Sigmoid colon (tissue), 7 donors: ENCODE measurements at regions of chr6 and their contacts with region 1.

Region 1: GRCh38 chr6:26537846-26538571 is at the start of gene HMGN4:
- DNase-seq: peak; percentile 94
- H3K4me3 ChIP-seq: peak within 1 kb of the TSS; percentile 78 to 95 (median 86)
- H3K27ac ChIP-seq: peak within 1 kb of the TSS; percentile 87 to 98 (median 94)
- H3K4me1 ChIP-seq: peaks cover 0 to 45% (median 29%) of the 10 kb centered on the region in 4 donors
- H3K27me3 ChIP-seq: no peaks in the 10 kb centered on the region
- CTCF ChIP-seq: no peak
- EP300 ChIP-seq: no peak
- POLR2A ChIP-seq: peak; percentile 48 to 52
- total RNA-seq, gene HMGN4: 70.6 to 104 (median 77.2) TPM

Region 2: GRCh38 chr6:25804804-25805203 is 733.2 kb before region 1 on chr6:
- intact Hi-C with region 1: no loop called
- DNase-seq: no peak
- H3K4me3 ChIP-seq: no peak overlapping the region
- H3K27ac ChIP-seq: no peak overlapping the region
- H3K4me1 ChIP-seq: no peaks in the 10 kb centered on the region
- H3K27me3 ChIP-seq: no peaks in the 10 kb centered on the region
- CTCF ChIP-seq: no peak
- EP300 ChIP-seq: no peak
- POLR2A ChIP-seq: no peak

Region 3: DNA sequence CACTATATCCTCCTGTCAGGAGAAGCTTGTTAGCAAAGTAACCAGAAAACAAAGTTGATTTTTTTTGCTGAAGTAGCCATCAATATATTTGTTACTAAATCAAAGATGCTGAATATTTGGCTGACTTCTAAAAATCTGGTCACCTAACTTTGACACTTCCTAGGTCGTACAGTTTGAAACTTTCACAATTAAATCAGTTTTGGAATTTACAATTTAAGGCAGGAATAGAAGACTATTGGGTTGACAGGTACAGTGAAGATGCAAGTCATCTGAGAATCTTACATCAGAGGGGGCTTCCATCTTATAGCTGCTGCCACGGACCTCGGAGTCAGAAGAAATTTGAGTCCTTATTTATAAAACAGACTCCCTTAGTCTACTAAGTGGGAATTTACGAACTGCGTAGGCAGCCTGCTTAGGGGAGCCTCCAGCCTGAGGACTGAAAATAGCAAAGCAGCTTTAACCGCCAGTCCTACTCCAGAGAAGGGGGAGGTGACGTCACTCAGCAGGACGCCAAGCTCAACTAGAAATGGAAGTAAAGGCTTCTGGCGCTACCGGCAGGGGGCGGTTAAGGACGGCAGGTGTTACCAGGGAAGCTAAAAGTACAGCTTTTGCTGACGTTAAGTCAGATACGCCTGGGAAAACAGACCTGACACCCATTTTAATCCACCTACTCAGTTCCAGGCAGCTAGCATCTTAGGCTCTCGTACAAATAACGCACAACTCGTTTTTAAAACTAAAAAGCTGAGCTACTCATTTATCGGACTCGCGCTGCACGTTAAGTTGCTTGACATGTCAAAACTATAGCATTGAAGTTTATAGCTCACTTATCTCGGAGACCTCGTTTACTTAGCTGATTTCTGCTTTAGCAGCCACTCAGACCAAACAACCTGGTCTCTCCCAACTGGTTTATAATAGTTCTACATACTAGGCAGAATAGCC is 511.8 kb before region 1 on chr6:
- intact Hi-C with region 1: loop called (anchors 10 kb)
- DNase-seq: peak; percentile 99
- H3K4me3 ChIP-seq: peak overlapping the region; percentile 53 to 76 (median 61)
- H3K27ac ChIP-seq: peak overlapping the region; percentile 90 to 99 (median 95)
- H3K4me1 ChIP-seq: peaks cover 0 to 31% (median 19%) of the 10 kb centered on the region in 4 donors
- H3K27me3 ChIP-seq: no peaks in the 10 kb centered on the region
- CTCF ChIP-seq: peak in 3 of 4 experiments; percentile 75 to 93 (median 77)
- EP300 ChIP-seq: peak in 2 of 4 donors; percentile 62 to 73
- POLR2A ChIP-seq: peak; percentile 46 to 53

Region 4: DNA sequence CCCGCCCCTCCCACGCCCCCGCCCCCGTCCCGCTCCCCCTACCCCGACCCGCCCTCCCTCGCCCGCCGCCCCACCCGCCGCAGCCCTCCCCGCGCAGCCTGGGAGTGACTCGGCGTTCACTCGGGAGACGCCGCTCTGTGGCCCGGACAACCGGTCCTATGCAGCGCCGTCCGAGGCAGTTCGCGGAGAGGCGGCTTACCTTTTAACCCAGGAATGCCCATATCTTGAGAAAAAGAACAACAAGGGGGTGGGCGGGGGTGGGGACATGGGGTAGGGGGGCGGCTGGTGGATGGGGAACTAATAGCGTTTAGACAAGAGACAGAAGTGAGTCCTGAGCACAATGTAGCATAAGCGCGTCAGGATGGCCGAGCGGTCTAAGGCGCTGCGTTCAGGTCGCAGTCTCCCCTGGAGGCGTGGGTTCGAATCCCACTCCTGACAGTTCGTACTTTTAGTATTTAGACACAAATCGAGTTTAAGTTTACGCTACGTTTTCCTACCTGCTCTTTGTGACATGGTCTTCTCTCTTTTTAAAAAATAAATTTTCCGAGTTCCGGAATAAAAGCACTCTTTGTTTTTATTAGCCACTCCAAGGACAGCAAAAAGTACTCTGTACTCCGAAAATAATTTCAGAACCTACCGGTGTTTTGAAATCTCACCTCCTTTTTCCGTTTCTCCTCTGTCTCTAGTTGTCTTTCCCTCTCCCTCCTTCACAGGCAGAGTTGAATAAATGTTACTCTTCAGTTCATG is 17.0 kb before region 1 on chr6:
- intact Hi-C with region 1: loop called (anchors 1 kb)
- DNase-seq: peak; percentile 95
- H3K4me3 ChIP-seq: peak overlapping the region; percentile 55 to 65 (median 61)
- H3K27ac ChIP-seq: peak overlapping the region; percentile 96 to 99 (median 98)
- H3K4me1 ChIP-seq: peaks cover 0 to 32% (median 6%) of the 10 kb centered on the region in 4 donors
- H3K27me3 ChIP-seq: no peaks in the 10 kb centered on the region
- CTCF ChIP-seq: no peak
- EP300 ChIP-seq: no peak
- POLR2A ChIP-seq: no peak

Region 5: DNA sequence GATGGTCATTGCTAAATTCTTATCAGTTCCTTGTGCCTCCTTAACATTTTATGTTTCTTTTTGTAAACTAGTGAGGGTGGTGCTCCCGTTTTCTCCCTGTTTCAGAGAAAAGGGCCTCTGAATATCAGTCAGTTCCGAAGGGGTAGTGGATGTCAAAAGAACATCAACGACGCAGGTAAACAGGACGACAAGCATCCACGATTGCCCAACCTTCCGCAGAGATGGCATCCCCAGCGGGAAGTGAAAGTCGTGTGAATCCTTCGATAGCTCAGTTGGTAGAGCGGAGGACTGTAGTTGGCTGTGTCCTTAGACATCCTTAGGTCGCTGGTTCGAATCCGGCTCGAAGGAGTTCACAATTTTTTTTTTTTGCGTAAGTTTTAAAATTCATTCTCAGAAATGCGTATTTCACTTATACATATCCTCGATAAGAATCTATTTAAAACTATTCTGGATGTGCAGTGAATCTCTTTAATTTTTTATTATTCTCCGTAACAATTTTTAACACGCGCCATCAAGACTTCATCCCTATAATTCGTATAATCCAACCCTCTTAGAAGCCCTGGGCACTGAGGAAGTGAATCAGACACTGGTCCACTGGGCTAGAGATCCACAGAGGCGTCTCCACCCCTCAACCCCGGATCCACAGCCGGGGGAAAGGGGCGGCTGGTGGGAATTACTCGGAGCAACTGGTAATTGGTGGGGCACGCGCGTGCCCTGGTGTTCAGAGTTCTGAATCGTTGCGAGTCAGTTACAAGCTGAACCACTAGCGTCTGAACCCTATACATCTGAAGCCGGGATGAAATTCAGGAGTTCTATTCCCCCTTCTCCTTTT is 30.8 kb after region 1 on chr6:
- intact Hi-C with region 1: loop called (anchors 1 kb)
- DNase-seq: peak; percentile 97
- H3K4me3 ChIP-seq: peak overlapping the region; percentile 52 to 59 (median 54)
- H3K27ac ChIP-seq: peak overlapping the region; percentile 50 to 76 (median 71)
- H3K4me1 ChIP-seq: peaks cover 0 to 14% (median 5%) of the 10 kb centered on the region in 4 donors
- H3K27me3 ChIP-seq: no peaks in the 10 kb centered on the region
- CTCF ChIP-seq: no peak
- EP300 ChIP-seq: no peak
- POLR2A ChIP-seq: no peak

Region 6: DNA sequence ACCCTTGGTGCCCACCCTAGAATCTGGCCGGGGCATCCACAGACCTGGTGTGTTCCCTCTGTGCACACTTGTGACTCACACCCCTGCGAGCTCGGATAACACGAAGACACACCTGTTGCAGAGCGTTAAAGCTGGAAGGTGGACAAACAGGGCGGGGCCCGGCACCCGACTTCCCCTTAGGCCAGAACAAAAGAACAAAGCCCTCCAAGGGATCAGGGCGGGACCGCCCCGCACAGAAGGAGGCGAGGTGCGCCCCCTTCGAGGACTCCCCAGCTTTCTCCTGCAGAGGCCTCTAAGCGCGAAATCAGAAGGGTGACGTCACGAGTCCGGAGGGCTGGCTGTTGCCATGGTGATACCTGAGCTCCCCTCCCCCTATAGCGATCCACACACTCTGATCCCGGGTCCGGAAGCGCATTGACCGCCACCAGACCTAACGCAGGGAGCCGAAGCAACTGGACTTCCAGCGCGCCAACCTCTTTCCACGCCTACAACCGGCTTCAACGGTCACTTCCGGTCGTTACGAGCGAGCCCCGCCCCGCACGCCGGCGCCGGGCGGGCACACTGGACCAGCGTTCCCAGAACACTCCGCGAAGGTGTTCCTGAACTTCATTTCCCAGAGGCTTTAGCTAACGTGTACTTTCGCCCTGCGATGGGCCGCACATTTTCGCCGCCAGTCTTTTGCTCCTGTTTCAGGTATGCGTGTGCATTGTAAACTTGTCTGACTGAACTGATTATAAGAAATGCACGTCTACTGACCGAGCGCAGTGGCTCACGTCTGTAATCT is 934.8 kb after region 1 on chr6 and contains the start of gene ZNF184:
- intact Hi-C with region 1: loop called (anchors 10 kb)
- DNase-seq: peak; percentile 98
- H3K4me3 ChIP-seq: peak within 1 kb of the TSS; percentile 54 to 86 (median 84)
- H3K27ac ChIP-seq: peak within 1 kb of the TSS; percentile 89 to 92 (median 90)
- H3K4me1 ChIP-seq: peaks cover 0 to 23% (median 20%) of the 10 kb centered on the region in 4 donors
- H3K27me3 ChIP-seq: no peaks in the 10 kb centered on the region
- CTCF ChIP-seq: peak in 1 of 4 experiments; percentile 31
- EP300 ChIP-seq: peak in 2 of 4 donors; percentile 8 to 57
- POLR2A ChIP-seq: peak; percentile 66 to 75
- total RNA-seq, gene ZNF184: 4.3 to 8.6 (median 7.3) TPM